ENCODE measurements at regions of chr5 and their contacts with region 1.

Region 1: GRCh38 chr5:178163772-178164735 is 10.4 kb upstream of the NHP2 start:
- DNase-seq: peak; percentile 87
- H3K4me3 ChIP-seq: peak overlapping the region in 1 of 2 donors; percentile 32
- H3K27ac ChIP-seq: no peak overlapping the region
- H3K4me1 ChIP-seq: peaks cover 7% of the 10 kb centered on the region
- H3K27me3 ChIP-seq: no peaks in the 10 kb centered on the region
- CTCF ChIP-seq: peak; percentile 90 to 98 (median 95)
- POLR2A ChIP-seq: no peak

Region 2: GRCh38 chr5:177997307-177997670 is 166.8 kb before region 1 on chr5:
- intact Hi-C with region 1: no loop called
- DNase-seq: no peak
- H3K4me3 ChIP-seq: no peak overlapping the region
- H3K27ac ChIP-seq: no peak overlapping the region
- H3K4me1 ChIP-seq: no peaks in the 10 kb centered on the region
- H3K27me3 ChIP-seq: no peaks in the 10 kb centered on the region
- CTCF ChIP-seq: no peak
- POLR2A ChIP-seq: no peak

Region 3: DNA sequence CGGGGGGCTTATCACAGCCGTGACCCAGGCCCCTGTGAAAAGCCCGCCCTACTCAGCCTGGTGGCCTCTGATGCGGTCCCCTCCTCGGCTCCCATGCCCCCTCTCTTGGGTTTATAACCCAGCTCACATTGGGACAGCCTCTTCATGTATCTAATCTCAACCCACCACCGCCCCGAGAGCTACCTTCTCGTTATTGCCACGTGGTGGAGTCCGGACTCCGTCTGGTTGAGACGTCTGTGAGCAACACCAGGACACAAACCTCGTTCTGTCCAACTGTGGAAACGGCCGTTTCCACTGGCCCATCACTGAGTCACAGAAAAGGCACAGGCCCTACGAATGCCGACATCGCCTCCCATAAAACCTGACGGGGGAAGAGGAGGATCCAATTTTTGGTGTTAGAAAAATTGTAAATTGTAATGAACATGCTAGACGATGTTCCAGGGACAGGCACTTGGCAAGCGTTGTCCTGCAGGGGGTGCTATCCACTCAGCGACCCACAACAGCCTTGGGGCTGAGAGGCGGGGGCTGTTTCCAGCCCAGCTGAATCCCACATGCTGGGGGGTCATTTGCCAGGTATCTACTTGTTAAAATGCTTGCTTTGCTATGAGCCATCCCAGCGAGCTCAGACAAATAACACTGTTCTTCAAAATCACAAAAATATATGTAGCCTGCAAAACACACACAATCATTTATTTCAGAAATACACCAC is 88.1 kb before region 1 on chr5:
- intact Hi-C with region 1: loop called (anchors 5 kb)
- DNase-seq: peak; percentile 78
- H3K4me3 ChIP-seq: no peak overlapping the region
- H3K27ac ChIP-seq: no peak overlapping the region
- H3K4me1 ChIP-seq: no peaks in the 10 kb centered on the region
- H3K27me3 ChIP-seq: no peaks in the 10 kb centered on the region
- CTCF ChIP-seq: peak; percentile 62 to 74 (median 74)
- POLR2A ChIP-seq: no peak

Region 4: DNA sequence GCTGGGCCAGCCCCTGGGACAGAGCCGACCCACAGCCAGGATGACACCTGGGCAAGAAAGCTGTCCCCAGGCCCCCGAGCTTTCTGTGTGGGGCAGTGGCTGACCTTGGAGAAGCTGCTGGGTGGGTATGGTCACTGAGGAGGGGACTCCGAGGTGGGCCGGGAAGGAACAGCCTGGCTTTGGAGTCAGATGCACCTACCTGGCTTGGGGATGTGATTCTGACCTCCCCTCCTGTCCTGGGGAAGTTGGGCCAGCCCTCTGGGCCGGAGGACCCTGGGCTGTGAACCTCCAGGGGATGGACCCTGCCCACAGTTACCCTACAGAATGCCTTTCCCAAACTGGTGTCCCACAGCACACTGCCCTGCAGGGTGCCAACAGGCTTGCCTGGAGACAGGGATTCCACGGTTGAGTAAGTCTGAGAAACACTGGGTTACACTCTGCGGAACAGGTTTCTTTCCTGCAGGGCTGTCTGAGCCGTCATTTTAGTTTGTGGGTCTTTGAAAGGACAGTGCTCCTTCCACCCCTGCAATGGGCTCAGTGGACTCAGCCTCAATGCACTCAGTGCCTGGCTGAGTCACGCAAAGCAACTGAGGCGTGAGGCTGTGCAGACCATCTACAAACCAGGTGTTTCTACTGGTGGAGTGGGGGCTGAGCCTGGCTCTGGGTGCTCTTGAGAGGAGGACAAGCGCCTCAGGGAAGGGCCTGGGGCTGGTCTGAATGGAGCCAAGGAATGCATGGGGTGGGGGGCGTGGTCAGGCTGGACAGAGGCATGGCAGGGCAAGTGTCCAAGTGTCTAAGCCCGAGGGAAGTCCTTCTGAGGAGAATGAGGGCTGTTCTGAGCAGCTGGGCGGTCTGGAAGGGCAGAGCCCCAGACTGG is 109.8 kb after region 1 on chr5:
- intact Hi-C with region 1: no loop called
- DNase-seq: no peak
- H3K4me3 ChIP-seq: no peak overlapping the region
- H3K27ac ChIP-seq: no peak overlapping the region
- H3K4me1 ChIP-seq: no peaks in the 10 kb centered on the region
- H3K27me3 ChIP-seq: no peaks in the 10 kb centered on the region
- CTCF ChIP-seq: no peak
- POLR2A ChIP-seq: no peak